Activated T-helper 1 cell treated with anti-CD3 and anti-CD28 coated beads, Interleukin-12 subunit alpha, Interleukin-12 subunit beta, Interleukin-2, Interleukin-4 antibody, amounts not matched to agents 30 ng/mL and 10 ng/mL and 1 ng/mL, durations not matched to agents 14 hours and 24 hours and 36 hours (primary cell): ENCODE measurements at regions of chr14 and their contacts with region 1.

Region 1: GRCh38 chr14:49633640-49634546 is 1.2 kb downstream of the DNAAF2 start:
- DNase-seq: peak; percentile 93
- H3K4me3 Mint-ChIP-seq: peak overlapping the region; percentile 93
- H3K27ac Mint-ChIP-seq: peak overlapping the region; percentile 96
- H3K4me1 Mint-ChIP-seq: peaks cover 39% of the 10 kb centered on the region
- H3K27me3 Mint-ChIP-seq: no peaks in the 10 kb centered on the region

Region 2: GRCh38 chr14:49461529-49462401 is 172.1 kb before region 1 on chr14:
- intact Hi-C with region 1: loop called (anchors 2 kb)
- DNase-seq: peak; percentile 40
- H3K4me3 Mint-ChIP-seq: no peak overlapping the region
- H3K27ac Mint-ChIP-seq: no peak overlapping the region
- H3K4me1 Mint-ChIP-seq: no peaks in the 10 kb centered on the region
- H3K27me3 Mint-ChIP-seq: peaks cover 26% of the 10 kb centered on the region

Region 3: DNA sequence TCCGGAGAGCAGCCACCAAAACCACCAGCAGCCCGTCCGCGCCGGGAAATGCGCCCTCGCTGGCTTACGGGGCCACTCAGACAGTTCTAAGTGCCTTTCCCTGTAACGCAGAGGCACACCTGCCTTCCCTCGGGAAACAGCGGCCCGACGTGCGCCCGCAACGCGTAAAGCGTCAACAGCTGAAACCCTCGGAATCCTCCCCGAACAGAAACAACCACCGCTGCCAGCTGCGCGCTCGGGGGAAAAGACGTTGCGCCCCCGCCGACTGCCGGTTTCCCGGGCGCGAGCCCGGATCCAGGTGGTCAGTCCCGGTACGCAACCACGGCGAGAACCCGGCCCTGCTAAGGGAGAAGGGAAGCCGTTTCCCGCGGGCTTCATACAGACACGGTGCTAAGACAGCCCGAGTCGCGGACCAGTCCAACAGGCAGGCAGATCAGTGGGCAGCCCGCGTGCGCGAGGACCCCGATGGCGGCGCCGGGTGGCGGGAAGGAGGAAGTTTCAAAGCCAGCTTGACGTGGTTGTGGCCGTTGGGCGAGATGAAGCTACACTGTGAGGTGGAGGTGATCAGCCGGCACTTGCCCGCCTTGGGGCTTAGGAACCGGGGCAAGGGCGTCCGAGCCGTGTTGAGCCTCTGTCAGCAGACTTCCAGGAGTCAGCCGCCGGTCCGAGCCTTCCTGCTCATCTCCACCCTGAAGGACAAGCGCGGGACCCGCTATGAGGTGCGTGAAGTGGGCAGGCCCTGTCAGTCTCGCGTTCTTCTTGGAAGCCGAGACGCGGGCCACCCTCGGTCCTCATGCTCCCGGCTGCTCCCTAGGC is 35.2 kb before region 1 on chr14 and contains the start of gene LRR1:
- intact Hi-C with region 1: loop called (anchors 1 kb)
- DNase-seq: peak; percentile 82
- H3K4me3 Mint-ChIP-seq: peak within 1 kb of the TSS; percentile 92
- H3K27ac Mint-ChIP-seq: peak within 1 kb of the TSS; percentile 95
- H3K4me1 Mint-ChIP-seq: peaks cover 44% of the 10 kb centered on the region
- H3K27me3 Mint-ChIP-seq: no peaks in the 10 kb centered on the region
- total RNA-seq, gene LRR1: 45.1 and 46.7 TPM in 2 replicates

Region 4: GRCh38 chr14:49620182-49621113 is 13.4 kb before region 1 on chr14 and contains the starts of genes MGAT2 and RPL36AL:
- intact Hi-C with region 1: loop called (anchors 1 kb)
- DNase-seq: peak; percentile 96
- H3K4me3 Mint-ChIP-seq: peak within 1 kb of the TSS; percentile 98
- H3K27ac Mint-ChIP-seq: peak within 1 kb of the TSS; percentile 98
- H3K4me1 Mint-ChIP-seq: peaks cover 53% of the 10 kb centered on the region
- H3K27me3 Mint-ChIP-seq: peaks cover 2% of the 10 kb centered on the region
- total RNA-seq, gene MGAT2: 57.5 and 58.3 TPM in 2 replicates
- total RNA-seq, gene RPL36AL: 224 and 237 TPM in 2 replicates

Region 5: DNA sequence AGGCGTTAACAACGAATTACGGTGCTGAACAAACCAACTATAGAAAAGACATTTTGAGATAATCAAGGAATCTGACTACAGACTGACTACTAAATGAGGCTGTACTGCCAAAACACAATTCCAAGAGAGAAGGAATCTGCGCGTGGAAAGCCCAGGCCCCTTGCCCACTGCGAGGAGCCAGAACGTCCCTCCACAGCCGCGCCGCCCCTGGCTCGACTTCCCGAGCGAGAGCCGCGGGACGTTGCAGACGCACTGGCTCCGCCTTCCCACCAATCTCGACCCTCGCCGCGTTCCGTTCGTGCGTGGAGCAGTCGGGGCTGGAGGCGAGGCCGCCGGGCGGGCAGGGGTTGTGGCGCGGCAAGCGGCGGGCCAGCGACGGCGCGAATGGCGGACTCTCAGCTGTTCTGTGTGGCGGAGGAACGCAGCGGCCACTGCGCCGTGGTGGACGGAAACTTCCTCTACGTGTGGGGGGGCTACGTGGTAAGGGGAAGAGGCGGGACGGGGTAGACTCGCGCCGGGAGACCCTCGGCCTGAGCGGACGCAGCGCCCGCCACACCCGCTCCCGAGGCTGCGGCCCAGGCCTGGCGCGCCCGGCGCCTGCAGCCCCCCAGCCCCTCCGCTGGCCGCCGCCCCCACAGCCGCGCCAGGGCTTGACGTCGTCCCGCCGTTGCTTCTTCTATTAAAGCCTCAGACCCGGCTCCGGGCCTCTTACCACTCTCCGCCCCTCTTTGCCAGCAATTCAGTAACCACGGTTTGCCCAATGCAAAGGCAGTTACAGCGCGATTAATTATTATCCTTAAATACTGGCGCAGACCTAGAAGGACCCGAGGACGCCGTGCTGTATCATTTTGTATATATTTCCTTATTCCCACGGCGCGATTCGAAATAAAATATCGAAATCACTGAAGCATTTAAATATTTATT is 59.2 kb after region 1 on chr14 and contains the start of gene KLHDC1:
- intact Hi-C with region 1: loop called (anchors 1 kb)
- DNase-seq: peak; percentile 74
- H3K4me3 Mint-ChIP-seq: peak within 1 kb of the TSS; percentile 87
- H3K27ac Mint-ChIP-seq: peak within 1 kb of the TSS; percentile 94
- H3K4me1 Mint-ChIP-seq: peaks cover 19% of the 10 kb centered on the region
- H3K27me3 Mint-ChIP-seq: peaks cover 1% of the 10 kb centered on the region
- total RNA-seq, gene KLHDC1: 0.93 and 1.9 TPM in 2 replicates

Region 6: DNA sequence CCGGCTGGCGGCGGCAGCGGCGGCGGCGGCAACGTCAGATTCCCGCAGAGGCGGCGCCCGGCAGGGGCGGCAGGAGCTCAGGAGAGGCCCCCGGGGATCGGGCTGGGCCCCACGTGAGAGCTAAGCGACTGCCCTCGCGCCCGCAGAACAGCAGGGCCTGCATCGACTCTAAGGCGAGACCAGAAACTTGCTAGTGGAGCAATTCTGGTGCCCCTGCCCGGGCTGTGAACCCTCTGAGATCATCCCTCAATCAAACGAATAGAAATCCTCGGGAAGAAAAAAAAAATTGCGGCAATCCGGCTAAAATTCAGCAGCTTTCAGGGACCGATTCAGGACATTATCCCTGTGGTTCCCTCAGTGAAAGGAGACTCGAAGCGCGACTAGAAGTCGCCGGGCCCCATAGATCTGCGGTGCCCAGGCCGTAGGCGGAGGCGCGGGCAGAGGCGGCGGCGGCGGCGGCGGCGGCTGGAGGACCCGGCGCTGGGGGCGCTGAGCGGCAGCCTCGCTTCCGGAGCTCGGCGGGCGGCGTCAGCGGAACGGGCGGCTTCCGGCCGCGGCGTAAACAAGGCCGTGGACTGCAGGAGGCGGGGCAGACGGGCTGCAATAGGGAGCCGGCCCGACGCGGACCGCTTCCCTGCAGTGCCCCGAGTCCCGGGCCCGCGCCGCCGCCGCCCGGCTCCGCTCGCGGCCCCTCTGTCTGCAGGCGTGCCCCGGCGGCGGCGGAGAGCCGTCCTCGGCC is 133.8 kb after region 1 on chr14 and contains the start of gene KLHDC2:
- intact Hi-C with region 1: loop called (anchors 1 kb)
- DNase-seq: peak; percentile 89
- H3K4me3 Mint-ChIP-seq: peak within 1 kb of the TSS; percentile 99
- H3K27ac Mint-ChIP-seq: peak within 1 kb of the TSS; percentile 100
- H3K4me1 Mint-ChIP-seq: peaks cover 33% of the 10 kb centered on the region
- H3K27me3 Mint-ChIP-seq: peaks cover 2% of the 10 kb centered on the region
- total RNA-seq, gene KLHDC2: 23.7 and 26.2 TPM in 2 replicates

Region 7: DNA sequence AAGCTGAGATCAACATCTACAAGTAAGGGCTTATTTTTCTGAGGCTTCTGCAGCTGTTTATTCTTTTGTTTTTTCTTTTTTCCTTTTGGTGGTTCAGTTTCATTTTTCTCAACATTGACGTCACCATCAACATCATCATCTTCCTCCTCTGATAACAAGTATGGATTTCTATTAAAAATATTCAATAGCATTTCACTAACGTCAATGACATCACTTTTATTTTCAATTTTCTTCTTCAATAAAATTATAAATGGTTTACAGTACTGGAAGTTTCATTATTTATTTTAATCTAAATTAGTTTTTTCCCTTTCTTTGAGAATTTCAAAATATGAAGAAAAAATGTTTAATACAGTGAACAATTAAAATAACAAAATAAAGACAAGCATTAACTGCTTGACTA is 194.7 kb after region 1 on chr14:
- intact Hi-C with region 1: loop called (anchors 1 kb)
- DNase-seq: no peak
- H3K4me3 Mint-ChIP-seq: no peak overlapping the region
- H3K27ac Mint-ChIP-seq: no peak overlapping the region
- H3K4me1 Mint-ChIP-seq: peaks cover 7% of the 10 kb centered on the region
- H3K27me3 Mint-ChIP-seq: no peaks in the 10 kb centered on the region